Activated CD8-positive, alpha-beta T cell treated with anti-CD3 and anti-CD28 coated beads for 36 hours (primary cell): ENCODE measurements at regions of chr2 and their contacts with region 1.

Region 1: DNA sequence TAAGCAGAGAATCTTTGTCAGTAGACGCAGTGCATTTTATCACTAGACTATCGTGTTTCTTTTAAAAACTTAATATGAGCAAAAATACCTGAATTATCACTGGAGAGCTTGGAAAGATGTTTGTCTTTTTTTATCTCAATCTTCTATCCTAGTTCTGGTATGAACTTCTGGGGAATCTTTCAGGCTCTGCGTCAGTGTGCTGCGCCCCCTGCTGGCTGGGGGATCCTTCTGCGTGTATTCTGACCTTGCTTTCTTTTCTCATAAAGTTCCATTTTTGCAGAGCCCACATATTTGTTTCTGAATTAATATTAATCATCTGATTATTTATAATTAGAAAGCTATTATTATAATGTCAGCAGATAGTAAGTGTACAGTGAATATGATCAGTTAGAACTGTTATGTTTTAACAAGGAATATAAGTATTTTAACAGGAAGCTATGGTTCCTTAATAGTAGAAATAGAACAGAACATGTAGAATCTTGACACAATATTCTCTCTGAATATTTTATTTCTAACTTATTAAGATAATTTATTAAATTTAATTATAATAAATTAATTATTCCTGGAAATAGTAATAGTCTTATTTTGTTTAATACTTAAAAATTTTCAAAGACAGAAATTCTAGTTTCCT is 945.0 kb upstream of the CRIM1 start:
- DNase-seq: peak; percentile 51
- ATAC-seq: no peak
- H3K4me3 Mint-ChIP-seq: no peak overlapping the region
- H3K27ac Mint-ChIP-seq: no peak overlapping the region
- H3K4me1 Mint-ChIP-seq: no peaks in the 10 kb centered on the region
- H3K27me3 Mint-ChIP-seq: peaks cover 1% of the 10 kb centered on the region
- CTCF ChIP-seq: peak; percentile 90

Region 2: DNA sequence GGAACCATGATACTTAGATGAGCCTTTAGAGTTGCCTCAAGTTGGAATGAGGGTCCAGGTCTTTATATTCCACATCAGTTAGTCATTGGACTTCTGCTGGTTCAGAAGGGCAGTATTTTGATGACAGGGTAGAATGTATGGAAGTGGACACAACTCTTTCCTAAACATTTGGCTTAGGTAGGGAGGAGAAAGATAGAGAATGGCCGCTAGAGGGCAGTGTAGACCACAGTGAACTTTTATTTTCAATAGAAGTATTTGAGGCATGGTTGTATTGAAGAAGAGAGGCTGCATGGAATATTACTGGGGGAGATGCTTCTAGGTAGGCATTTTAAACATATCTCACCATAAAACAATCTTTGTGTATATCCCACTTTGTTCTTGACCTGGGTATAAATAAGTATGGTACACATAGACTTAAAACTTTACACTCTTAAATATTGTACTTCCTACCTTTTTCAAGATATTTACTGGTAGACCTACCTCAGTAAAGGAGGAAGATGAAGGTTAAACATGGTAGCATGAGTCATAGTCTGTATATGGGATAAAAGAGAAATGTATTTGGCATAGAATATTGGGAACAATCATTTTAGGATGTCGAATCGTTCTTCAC is 1313.9 kb before region 1 on chr2:
- CTCF ChIA-PET with region 1: interaction called, 6 read pairs
- POLR2A ChIA-PET with region 1: no interaction called
- intact Hi-C with region 1: loop called (anchors 5 kb)
- DNase-seq: peak; percentile 55
- ATAC-seq: peak; percentile 24
- H3K4me3 Mint-ChIP-seq: no peak overlapping the region
- H3K27ac Mint-ChIP-seq: no peak overlapping the region
- H3K4me1 Mint-ChIP-seq: no peaks in the 10 kb centered on the region
- H3K27me3 Mint-ChIP-seq: peaks cover 3% of the 10 kb centered on the region
- CTCF ChIP-seq: peak; percentile 87

Region 3: GRCh38 chr2:35347561-35347960 is 63.0 kb before region 1 on chr2:
- CTCF ChIA-PET with region 1: no interaction called
- POLR2A ChIA-PET with region 1: no interaction called
- intact Hi-C with region 1: no loop called
- DNase-seq: no peak
- ATAC-seq: no peak
- H3K4me3 Mint-ChIP-seq: no peak overlapping the region
- H3K27ac Mint-ChIP-seq: no peak overlapping the region
- H3K4me1 Mint-ChIP-seq: no peaks in the 10 kb centered on the region
- H3K27me3 Mint-ChIP-seq: no peaks in the 10 kb centered on the region
- CTCF ChIP-seq: no peak